Activated naive CD4-positive, alpha-beta T cell treated with anti-CD3 and anti-CD28 coated beads for 36 hours (primary cell): ENCODE measurements at regions of chr10 and their contacts with region 1.

Region 1: GRCh38 chr10:69506834-69507721 is 55.8 kb downstream of the TSPAN15 start:
- DNase-seq: no peak
- H3K4me3 Mint-ChIP-seq: peak overlapping the region; percentile 66
- H3K27ac Mint-ChIP-seq: peak overlapping the region; percentile 34
- H3K4me1 Mint-ChIP-seq: peaks cover 10% of the 10 kb centered on the region
- H3K27me3 Mint-ChIP-seq: no peaks in the 10 kb centered on the region

Region 2: DNA sequence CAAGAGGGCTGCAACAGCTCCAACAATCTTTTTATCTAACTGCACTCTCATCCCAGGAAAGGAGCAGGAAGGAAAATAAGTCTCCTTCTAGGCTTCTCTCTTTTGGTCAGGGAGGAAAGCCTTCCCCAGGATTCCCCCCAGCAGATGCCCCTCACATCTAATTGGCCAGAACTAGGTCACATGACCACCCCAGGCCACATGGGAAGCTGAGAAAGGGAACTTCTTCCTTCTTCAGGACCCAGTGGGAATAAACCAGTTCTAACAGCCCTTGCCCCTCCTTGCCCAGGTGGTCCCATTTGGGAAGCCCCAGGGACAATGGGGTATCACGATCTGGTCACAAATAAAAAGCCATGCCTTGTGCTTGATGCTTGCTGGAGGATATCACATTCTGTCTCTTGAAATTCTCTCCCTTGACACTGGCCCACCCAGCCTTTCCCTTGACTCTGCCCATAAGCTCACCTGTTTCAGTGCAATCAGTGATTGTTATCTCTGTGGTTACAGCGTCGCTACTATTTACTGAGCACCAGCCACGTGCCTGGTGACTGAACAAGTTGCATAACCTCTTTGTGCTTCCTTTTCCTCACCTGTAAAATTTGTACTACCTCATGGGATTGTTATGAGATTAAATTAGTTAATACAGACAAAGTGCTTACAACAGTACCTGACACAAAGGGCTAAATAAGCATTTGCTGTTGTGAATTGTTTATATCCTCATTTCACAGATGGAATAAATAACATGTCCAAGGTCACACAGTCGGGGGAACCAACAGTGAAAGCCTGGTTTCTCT is 81.4 kb before region 1 on chr10:
- CTCF ChIA-PET with region 1: interaction called, 8 read pairs
- intact Hi-C with region 1: loop called (anchors 1 kb)
- DNase-seq: peak; percentile 24
- H3K4me3 Mint-ChIP-seq: no peak overlapping the region
- H3K27ac Mint-ChIP-seq: no peak overlapping the region
- H3K4me1 Mint-ChIP-seq: peaks cover 43% of the 10 kb centered on the region
- H3K27me3 Mint-ChIP-seq: no peaks in the 10 kb centered on the region

Region 3: GRCh38 chr10:69451209-69451783 is 55.8 kb before region 1 on chr10 and contains the start of gene TSPAN15:
- CTCF ChIA-PET with region 1: interaction called, 6 read pairs
- intact Hi-C with region 1: loop called (anchors 1 kb)
- DNase-seq: peak; percentile 84
- H3K4me3 Mint-ChIP-seq: peak within 1 kb of the TSS; percentile 84
- H3K27ac Mint-ChIP-seq: no peak within 1 kb of the TSS
- H3K4me1 Mint-ChIP-seq: peaks cover 11% of the 10 kb centered on the region
- H3K27me3 Mint-ChIP-seq: peaks cover 2% of the 10 kb centered on the region
- total RNA-seq, gene TSPAN15: 0.72 to 1.1 TPM

Region 4: GRCh38 chr10:69483963-69484362 is 23.1 kb before region 1 on chr10:
- CTCF ChIA-PET with region 1: no interaction called
- intact Hi-C with region 1: no loop called
- DNase-seq: no peak
- H3K4me3 Mint-ChIP-seq: no peak overlapping the region
- H3K27ac Mint-ChIP-seq: no peak overlapping the region
- H3K4me1 Mint-ChIP-seq: no peaks in the 10 kb centered on the region
- H3K27me3 Mint-ChIP-seq: no peaks in the 10 kb centered on the region

Region 5: DNA sequence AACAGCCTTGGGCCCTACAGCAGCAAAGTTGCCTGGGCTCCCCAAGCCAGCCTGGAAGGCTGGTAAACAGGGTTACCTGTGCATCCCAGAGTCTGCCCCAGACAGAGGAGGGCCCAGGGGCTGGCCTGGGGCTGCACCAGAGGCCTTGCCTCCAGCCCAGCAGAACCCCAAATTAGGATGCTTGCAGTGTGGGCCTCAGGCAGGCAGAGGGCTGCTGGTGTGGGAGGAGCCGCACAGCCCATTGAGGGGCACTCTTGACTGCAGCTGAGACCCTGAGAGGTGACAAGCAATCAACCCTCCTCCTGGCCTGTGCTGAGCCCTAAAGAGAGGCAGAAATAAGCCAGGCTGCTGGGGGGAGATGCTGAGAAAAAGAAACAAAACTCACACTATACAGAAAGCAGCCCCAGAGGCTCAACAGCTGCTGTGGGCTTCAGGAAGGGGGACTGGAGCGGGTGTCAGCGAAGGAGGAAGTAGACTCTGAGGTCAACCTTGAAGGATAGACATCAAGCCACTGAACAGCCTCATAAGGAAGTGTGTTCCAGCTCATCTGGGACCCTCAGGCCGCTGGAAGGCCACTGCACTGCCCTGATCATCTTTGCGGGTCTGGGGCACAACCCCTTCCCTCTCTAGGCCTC is 619.0 kb after region 1 on chr10:
- CTCF ChIA-PET with region 1: no interaction called
- intact Hi-C with region 1: no loop called
- DNase-seq: no peak
- H3K4me3 Mint-ChIP-seq: no peak overlapping the region
- H3K27ac Mint-ChIP-seq: no peak overlapping the region
- H3K4me1 Mint-ChIP-seq: no peaks in the 10 kb centered on the region
- H3K27me3 Mint-ChIP-seq: peaks cover 3% of the 10 kb centered on the region